Mammary epithelial cell (primary cell): ENCODE measurements at regions of chr2 and their contacts with region 1.

Region 1: GRCh38 chr2:15636972-15637785 is 45.5 kb downstream of the DDX1 start:
- DNase-seq: peak; percentile 40
- H3K4me3 ChIP-seq: no peak overlapping the region
- H3K27ac ChIP-seq: no peak overlapping the region
- H3K4me1 ChIP-seq: peaks cover 10% of the 10 kb centered on the region
- H3K27me3 ChIP-seq: no peaks in the 10 kb centered on the region
- CTCF ChIP-seq: peak; percentile 84 to 86

Region 2: GRCh38 chr2:15748736-15749323 is 111.7 kb after region 1 on chr2:
- CTCF ChIA-PET with region 1: no interaction called
- dilution Hi-C with region 1: no loop called
- in situ Hi-C with region 1: no loop called
- intact Hi-C with region 1: loop called (anchors 1 kb)
- DNase-seq: no peak
- H3K4me3 ChIP-seq: no peak overlapping the region
- H3K27ac ChIP-seq: no peak overlapping the region
- H3K4me1 ChIP-seq: no peaks in the 10 kb centered on the region
- H3K27me3 ChIP-seq: peaks cover 9% of the 10 kb centered on the region
- CTCF ChIP-seq: peak; percentile 26 to 52

Region 3: GRCh38 chr2:16139663-16140615 is 502.8 kb after region 1 on chr2:
- CTCF ChIA-PET with region 1: no interaction called
- dilution Hi-C with region 1: no loop called
- in situ Hi-C with region 1: no loop called
- intact Hi-C with region 1: loop called (anchors 2 kb)
- DNase-seq: no peak
- H3K4me3 ChIP-seq: no peak overlapping the region
- H3K27ac ChIP-seq: no peak overlapping the region
- H3K4me1 ChIP-seq: peaks cover 18% of the 10 kb centered on the region
- H3K27me3 ChIP-seq: no peaks in the 10 kb centered on the region
- CTCF ChIP-seq: no peak

Region 4: GRCh38 chr2:16487686-16488085 is 850.5 kb after region 1 on chr2:
- CTCF ChIA-PET with region 1: no interaction called
- dilution Hi-C with region 1: no loop called
- in situ Hi-C with region 1: loop called (anchors 10 kb)
- intact Hi-C with region 1: loop called (anchors 1 kb)
- DNase-seq: peak; percentile 21
- H3K4me3 ChIP-seq: no peak overlapping the region
- H3K27ac ChIP-seq: no peak overlapping the region
- H3K4me1 ChIP-seq: no peaks in the 10 kb centered on the region
- H3K27me3 ChIP-seq: peaks cover 2% of the 10 kb centered on the region
- CTCF ChIP-seq: peak; percentile 17 to 52

Region 5: DNA sequence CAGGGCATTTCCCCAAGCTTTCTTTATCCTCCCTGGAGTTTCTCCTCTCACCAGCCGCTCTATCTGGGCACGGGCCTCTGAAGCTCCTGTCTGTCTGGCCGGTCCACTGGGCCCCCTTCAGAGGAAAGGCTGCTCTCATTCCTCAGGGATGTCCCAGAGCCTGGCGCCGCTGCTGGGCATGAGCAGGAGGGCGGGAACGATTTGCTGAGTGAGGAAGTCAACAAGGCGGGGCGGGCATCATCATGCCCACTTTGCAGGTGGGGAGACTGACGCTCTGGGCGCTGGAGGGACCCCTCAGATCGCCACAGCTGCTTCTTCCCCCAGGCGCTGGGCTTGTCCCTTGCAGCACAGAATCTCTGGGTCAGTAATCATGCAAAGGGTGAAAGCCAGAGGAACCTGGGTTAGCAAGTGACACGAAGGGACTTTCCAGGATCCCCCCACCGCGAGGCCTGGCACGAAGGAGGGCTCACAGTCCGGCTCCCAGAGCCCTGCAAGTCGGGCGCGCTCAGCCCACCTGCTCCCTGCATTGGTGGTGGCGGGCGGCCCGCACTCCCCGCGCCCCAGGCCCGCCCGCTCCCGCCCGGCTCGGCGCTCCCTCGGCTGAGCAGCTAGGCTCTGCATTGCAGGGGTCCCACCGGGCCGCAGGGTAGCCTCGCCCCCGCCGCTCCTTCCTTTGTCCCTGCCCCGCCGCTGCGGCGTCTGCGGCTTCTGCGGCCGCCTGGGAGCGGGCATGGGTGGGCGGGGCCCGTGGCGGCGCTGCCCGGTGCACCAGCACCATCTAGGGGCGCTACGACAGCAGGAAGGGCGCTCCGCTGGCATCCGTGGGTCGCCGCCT is 870.7 kb after region 1 on chr2:
- CTCF ChIA-PET with region 1: no interaction called
- dilution Hi-C with region 1: no loop called
- in situ Hi-C with region 1: no loop called
- intact Hi-C with region 1: loop called (anchors 1 kb)
- DNase-seq: peak; percentile 3
- H3K4me3 ChIP-seq: no peak overlapping the region
- H3K27ac ChIP-seq: no peak overlapping the region
- H3K4me1 ChIP-seq: no peaks in the 10 kb centered on the region
- H3K27me3 ChIP-seq: peaks cover 7% of the 10 kb centered on the region
- CTCF ChIP-seq: peak; percentile 13 to 58